HEK293 (cell line): ENCODE measurements at regions of chr1 and their contacts with region 1.

Region 1: DNA sequence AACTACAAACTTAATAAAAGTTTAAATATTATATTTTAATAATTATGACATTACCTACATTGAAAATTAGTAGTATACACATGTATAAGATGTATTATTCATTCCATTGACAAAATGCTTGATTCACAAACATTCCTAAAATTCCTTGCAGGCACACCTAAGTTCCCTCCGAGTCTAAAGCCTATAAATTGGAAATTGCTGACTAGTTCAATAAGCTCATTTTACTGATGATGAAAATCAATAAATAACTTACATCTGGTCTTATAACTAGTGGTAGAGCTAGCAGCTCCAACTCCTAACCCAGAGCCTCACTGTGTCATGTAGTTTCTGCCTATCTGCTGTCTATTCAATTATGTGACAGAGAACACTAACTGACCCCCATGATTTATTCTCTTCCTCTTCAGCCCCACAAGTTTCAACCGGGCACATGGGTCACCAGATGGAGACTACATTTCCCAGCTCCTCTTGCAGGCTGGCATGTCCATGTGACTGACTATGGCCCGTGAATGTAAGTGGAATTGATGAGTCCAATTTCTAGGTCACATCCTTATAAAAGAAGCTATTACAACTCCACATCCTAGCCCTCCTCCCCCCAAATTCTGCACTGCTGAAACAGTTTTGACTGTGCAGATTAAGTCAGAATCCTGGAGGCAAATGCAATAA is 29.6 kb upstream of the LRRC8D start:
- H3K4me3 ChIP-seq: no peak overlapping the region
- H3K27ac ChIP-seq: no peak overlapping the region
- H3K4me1 ChIP-seq: no peaks in the 10 kb centered on the region
- CTCF ChIP-seq: no peak

Region 2: DNA sequence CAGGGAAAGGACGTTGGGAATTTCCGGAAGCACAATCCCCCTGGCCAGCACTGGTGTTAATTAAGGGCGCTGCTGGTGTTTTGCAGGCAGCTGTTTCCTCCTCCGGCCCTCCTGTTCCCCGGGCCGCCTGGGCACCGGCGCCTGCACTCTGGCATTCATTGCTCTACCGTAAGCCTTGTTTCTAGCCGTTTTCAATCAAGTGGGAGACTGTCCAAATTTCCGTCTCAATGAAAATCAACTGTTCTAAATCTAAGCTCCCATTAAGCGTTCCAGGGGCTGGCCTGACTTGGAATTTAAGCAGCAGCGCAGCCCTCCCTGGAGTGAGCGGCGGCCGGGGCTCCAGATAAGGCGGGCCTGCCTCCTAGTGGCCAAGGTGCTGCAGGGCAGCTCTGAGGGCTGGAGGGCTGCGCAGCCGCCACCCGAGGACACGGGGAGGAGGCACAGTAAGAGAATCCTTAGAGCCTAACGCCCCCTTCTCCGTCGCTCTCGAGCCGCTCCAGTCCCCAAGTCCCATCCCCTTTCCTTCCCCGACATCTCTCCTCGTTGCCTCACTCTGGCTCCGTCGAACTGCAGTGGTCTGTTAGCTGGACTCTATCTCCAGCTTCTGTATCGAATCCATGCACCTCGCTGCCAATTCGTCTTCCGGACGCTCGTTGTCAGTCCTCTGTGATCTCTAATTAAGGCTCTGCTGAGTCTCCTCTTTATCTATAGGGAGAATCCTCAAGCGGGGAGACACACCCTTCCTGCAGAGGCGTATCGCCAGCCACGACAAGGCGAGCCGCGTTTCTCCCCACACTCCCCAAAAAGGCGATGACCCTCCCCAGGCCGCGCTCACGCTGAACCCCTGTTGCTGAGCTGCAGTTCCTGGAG is 28.2 kb before region 1 on chr1:
- CTCF ChIA-PET with region 1: no interaction called
- POLR2A ChIA-PET with region 1: no interaction called
- H3K4me3 ChIP-seq: peak overlapping the region; percentile 35
- H3K27ac ChIP-seq: no peak overlapping the region; the same call in 1 of the 2 replicates
- H3K4me1 ChIP-seq: no peaks in the 10 kb centered on the region
- CTCF ChIP-seq: peak; percentile 97

Region 3: GRCh38 chr1:89780721-89781120 is 10.5 kb before region 1 on chr1:
- CTCF ChIA-PET with region 1: interaction called, 10 read pairs
- POLR2A ChIA-PET with region 1: no interaction called
- H3K4me3 ChIP-seq: no peak overlapping the region
- H3K27ac ChIP-seq: no peak overlapping the region
- H3K4me1 ChIP-seq: no peaks in the 10 kb centered on the region
- CTCF ChIP-seq: peak; percentile 59